HCT116 (cell line): ENCODE measurements at regions of chr5 and their contacts with region 1.

Region 1: DNA sequence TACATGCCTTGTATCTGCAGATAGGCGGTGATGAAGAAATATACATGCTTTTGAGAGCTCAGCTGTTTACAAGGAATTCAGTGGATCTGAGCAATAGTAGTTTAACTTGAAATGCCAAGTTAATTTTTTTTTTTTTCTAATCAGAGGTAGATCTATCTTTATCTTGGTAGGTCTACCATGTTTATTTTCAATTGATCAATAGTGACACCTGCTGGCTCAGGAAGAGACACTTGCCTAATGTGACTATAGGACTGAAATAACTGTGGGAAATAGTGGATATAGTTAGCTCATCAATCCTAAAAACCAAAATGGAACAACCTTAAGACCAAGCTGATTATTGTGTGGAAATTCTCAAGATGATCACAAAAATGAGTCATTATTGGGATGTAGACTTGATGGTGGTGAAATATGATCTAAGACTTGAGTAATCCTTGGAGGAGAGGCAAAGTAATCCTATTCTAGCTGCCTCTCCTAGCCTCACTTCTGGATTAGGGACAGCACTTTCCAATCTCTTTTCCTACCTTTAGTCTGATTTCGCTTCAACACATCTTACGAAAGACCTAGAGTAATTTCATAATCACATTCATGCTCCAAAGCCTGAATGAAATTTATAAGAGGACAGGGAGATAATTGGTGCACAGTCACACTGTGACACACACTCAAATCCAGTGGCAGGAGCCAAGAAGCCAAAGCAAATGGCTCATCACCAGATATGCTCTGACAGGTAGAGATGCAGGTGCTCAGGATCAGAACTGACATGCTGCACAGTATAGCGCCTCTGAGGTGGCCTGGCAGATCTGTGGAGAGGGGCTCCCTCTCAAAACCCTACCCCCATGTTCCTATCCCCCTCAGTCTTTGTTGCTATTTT is 156.3 kb downstream of the HMHB1 start:
- DNase-seq: peak; percentile 22
- ATAC-seq: peak; percentile 78
- H3K4me3 ChIP-seq: no peak overlapping the region
- H3K27ac ChIP-seq: no peak overlapping the region
- H3K4me1 ChIP-seq: no peaks in the 10 kb centered on the region
- H3K27me3 ChIP-seq: no peaks in the 10 kb centered on the region
- CTCF ChIP-seq: peak; percentile 42 to 66 (median 50); a peak in 4 of 6 replicates
- POLR2A ChIP-seq: no peak
- RAD21 ChIP-seq: peak; percentile 67

Region 2: GRCh38 chr5:143008809-143009521 is 959.3 kb before region 1 on chr5:
- CTCF ChIA-PET with region 1: no interaction called
- POLR2A ChIA-PET with region 1: no interaction called
- RAD21 ChIA-PET with region 1: no interaction called
- intact Hi-C with region 1: loop called (anchors 5 kb)
- DNase-seq: peak; percentile 79
- ATAC-seq: peak; percentile 70
- H3K4me3 ChIP-seq: no peak overlapping the region
- H3K27ac ChIP-seq: no peak overlapping the region
- H3K4me1 ChIP-seq: peaks cover 0 to 17% of the 10 kb centered on the region in 2 experiments; a peak in 2 of 4 replicates
- H3K27me3 ChIP-seq: no peaks in the 10 kb centered on the region
- CTCF ChIP-seq: no peak
- POLR2A ChIP-seq: no peak
- RAD21 ChIP-seq: no peak

Region 3: DNA sequence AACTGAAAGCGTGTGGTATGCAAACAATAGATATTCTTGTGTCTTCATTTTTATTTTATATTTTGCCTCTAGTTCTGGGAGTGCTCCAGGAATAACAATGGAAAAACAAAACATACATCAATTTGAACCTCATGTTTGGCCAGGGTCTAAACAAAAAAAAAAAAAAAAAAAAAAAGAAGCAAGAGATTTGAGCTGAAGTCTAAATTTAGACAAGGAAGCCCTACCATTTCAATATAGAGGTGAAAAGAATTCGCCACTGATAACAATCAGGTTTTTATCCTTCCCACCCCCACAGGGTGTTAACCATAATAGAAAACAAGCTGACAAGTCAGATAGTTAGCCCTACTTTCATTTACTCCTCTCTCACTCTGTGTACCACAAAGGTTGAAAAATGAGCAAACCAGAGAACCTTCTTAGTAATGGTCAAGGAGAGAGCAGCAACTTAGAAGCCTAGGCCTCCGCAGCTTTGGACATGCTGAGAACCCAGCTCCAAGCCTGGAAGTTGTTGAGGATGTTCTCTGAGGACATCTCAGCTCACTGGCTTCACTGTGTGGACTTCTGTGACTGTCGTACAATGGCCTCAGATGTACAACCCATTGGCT is 274.5 kb before region 1 on chr5:
- CTCF ChIA-PET with region 1: no interaction called
- POLR2A ChIA-PET with region 1: no interaction called
- RAD21 ChIA-PET with region 1: no interaction called
- intact Hi-C with region 1: no loop called
- DNase-seq: no peak
- ATAC-seq: no peak
- H3K4me3 ChIP-seq: no peak overlapping the region
- H3K27ac ChIP-seq: no peak overlapping the region
- H3K4me1 ChIP-seq: no peaks in the 10 kb centered on the region
- H3K27me3 ChIP-seq: no peaks in the 10 kb centered on the region
- CTCF ChIP-seq: no peak
- POLR2A ChIP-seq: no peak
- RAD21 ChIP-seq: no peak

Region 4: DNA sequence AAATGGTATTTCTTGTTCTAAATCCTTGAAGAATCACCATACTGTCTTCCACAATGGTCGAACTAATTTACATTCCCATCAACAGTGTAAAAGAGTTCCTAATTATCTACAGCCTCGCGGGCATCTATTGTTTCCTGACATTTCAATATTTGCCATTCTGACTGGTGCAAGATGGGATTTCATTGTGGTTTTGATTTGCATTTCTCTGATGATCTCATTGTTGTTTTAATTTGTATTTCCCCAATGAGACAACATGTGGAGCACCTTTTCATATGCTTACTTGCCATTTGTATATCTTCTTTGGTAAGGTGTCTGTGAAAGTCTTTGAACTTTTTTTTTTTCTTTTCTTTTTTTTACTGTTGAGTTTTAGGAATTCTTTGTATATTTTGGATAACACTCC is 676.1 kb after region 1 on chr5:
- CTCF ChIA-PET with region 1: no interaction called
- POLR2A ChIA-PET with region 1: no interaction called
- RAD21 ChIA-PET with region 1: no interaction called
- intact Hi-C with region 1: no loop called
- DNase-seq: no peak
- ATAC-seq: no peak
- H3K4me3 ChIP-seq: no peak overlapping the region
- H3K27ac ChIP-seq: no peak overlapping the region
- H3K4me1 ChIP-seq: no peaks in the 10 kb centered on the region
- H3K27me3 ChIP-seq: peaks cover 7% of the 10 kb centered on the region; the same call in 1 of the 2 replicates
- CTCF ChIP-seq: no peak
- POLR2A ChIP-seq: no peak
- RAD21 ChIP-seq: no peak